ENCODE measurements at regions of chr15 and their contacts with region 1.

Region 1: DNA sequence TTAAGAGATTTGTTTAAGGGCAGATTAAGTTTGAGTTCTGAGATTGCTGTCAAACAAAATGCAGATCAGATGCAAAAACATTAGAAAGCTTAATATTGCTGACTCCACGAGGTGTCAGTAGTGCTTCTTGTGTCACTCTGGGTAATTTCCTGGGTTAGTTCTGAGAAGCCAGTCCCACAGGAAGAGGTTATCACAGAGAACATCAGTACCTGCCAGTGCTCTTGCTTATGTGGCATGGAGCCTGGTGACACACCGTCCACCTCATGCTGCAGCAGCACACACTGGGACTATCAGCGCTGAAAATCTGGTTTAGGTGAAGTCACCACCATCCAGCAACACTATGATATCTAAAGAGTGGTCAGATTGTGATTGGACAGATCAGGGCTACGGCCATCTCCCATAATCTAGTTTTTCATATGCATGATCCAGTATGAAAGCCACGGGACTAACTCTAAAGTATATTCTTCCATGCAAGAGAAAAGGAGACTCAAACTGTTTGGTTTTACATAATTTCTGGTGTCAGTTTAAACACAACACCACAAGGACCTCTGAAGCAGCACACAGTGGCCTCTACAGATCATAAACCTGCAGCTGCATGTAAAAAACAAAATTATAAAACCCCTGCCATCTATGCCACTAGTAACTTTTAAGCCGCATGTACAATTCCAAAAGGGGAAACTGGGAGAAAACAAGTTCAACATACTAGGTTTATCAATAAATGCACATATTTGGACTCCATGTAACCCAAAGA is 36.1 kb upstream of the MYO5C start:
- DNase-seq: peak; percentile 64 to 74 (median 66)
- H3K4me3 ChIP-seq: no peak overlapping the region
- H3K4me3 Mint-ChIP-seq: peak overlapping the region in 7 of 8 donors; percentile 46 to 79 (median 72)
- H3K27ac ChIP-seq: no peak overlapping the region
- H3K27ac Mint-ChIP-seq: peak overlapping the region; percentile 70 to 93 (median 80)
- H3K4me1 ChIP-seq: peaks cover 13% of the 10 kb centered on the region
- H3K4me1 Mint-ChIP-seq: peaks cover 13 to 21% (median 15%) of the 10 kb centered on the region in 4 donors
- H3K27me3 ChIP-seq: no peaks in the 10 kb centered on the region
- H3K27me3 Mint-ChIP-seq: no peaks in the 10 kb centered on the region

Region 2: GRCh38 chr15:52256366-52256765 is 75.3 kb before region 1 on chr15:
- CTCF ChIA-PET with region 1: interaction called, 24 read pairs
- POLR2A ChIA-PET with region 1: no interaction called
- intact Hi-C with region 1: loop called (anchors 1 kb)
- DNase-seq: peak; percentile 75 to 77 (median 76)
- H3K4me3 ChIP-seq: no peak overlapping the region
- H3K4me3 Mint-ChIP-seq: peak overlapping the region; percentile 63 to 90 (median 82)
- H3K27ac ChIP-seq: no peak overlapping the region
- H3K27ac Mint-ChIP-seq: peak overlapping the region; percentile 20 to 86 (median 72)
- H3K4me1 ChIP-seq: peaks cover 15% of the 10 kb centered on the region
- H3K4me1 Mint-ChIP-seq: peaks cover 10 to 26% (median 19%) of the 10 kb centered on the region in 4 donors
- H3K27me3 ChIP-seq: no peaks in the 10 kb centered on the region
- H3K27me3 Mint-ChIP-seq: no peaks in the 10 kb centered on the region

Region 3: DNA sequence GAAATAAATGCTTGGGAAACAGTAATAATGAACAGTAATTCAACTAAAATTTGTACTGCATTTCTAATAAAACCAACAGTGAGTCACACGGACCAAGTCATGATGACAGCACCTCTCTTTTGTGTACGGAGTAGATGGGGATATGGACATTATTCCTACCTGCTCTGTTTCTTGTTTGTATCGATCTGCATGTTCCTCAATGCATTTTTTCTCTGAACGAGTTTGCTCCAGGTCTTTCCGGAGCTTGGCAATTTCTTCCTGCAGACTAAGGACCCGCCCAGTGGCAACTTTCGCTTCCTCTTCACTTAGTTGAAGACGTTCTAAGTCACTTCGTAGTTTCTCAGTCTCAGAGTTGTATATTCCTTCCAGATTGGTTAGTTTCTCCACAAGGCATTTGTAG is 38.3 kb after region 1 on chr15:
- CTCF ChIA-PET with region 1: no interaction called
- POLR2A ChIA-PET with region 1: no interaction called
- intact Hi-C with region 1: no loop called
- DNase-seq: no peak
- H3K4me3 ChIP-seq: no peak overlapping the region
- H3K4me3 Mint-ChIP-seq: no peak overlapping the region
- H3K27ac ChIP-seq: no peak overlapping the region
- H3K27ac Mint-ChIP-seq: peak overlapping the region in 1 of 7 donors; percentile 12
- H3K4me1 ChIP-seq: no peaks in the 10 kb centered on the region
- H3K4me1 Mint-ChIP-seq: no peaks in the 10 kb centered on the region
- H3K27me3 ChIP-seq: no peaks in the 10 kb centered on the region
- H3K27me3 Mint-ChIP-seq: no peaks in the 10 kb centered on the region

Region 4: GRCh38 chr15:52466134-52466701 is 134.6 kb after region 1 on chr15:
- CTCF ChIA-PET with region 1: interaction called, 11 read pairs
- POLR2A ChIA-PET with region 1: interaction called, 4 read pairs
- intact Hi-C with region 1: loop called (anchors 1 kb)
- DNase-seq: peak in 3 of 5 donors; percentile 8 to 49 (median 17)
- H3K4me3 ChIP-seq: no peak overlapping the region
- H3K4me3 Mint-ChIP-seq: peak overlapping the region in 4 of 8 donors; percentile 9 to 39 (median 28)
- H3K27ac ChIP-seq: peak overlapping the region; percentile 35
- H3K27ac Mint-ChIP-seq: peak overlapping the region; percentile 26 to 95 (median 87)
- H3K4me1 ChIP-seq: peaks cover 47% of the 10 kb centered on the region
- H3K4me1 Mint-ChIP-seq: peaks cover 43 to 65% (median 53%) of the 10 kb centered on the region in 4 donors
- H3K27me3 ChIP-seq: no peaks in the 10 kb centered on the region
- H3K27me3 Mint-ChIP-seq: no peaks in the 10 kb centered on the region

Region 5: GRCh38 chr15:52568601-52569256 is 237.1 kb after region 1 on chr15 and contains the start of gene ARPP19:
- CTCF ChIA-PET with region 1: interaction called, 5 read pairs
- POLR2A ChIA-PET with region 1: interaction called, 3 read pairs
- intact Hi-C with region 1: loop called (anchors 1 kb)
- DNase-seq: peak; percentile 78 to 84 (median 80)
- H3K4me3 ChIP-seq: peak within 1 kb of the TSS; percentile 64 to 80
- H3K4me3 Mint-ChIP-seq: peak within 1 kb of the TSS; percentile 94 to 100 (median 96)
- H3K27ac ChIP-seq: peak within 1 kb of the TSS; percentile 98
- H3K27ac Mint-ChIP-seq: peak within 1 kb of the TSS; percentile 98 to 100 (median 100)
- H3K4me1 ChIP-seq: peaks cover 44% of the 10 kb centered on the region
- H3K4me1 Mint-ChIP-seq: peaks cover 31 to 46% (median 38%) of the 10 kb centered on the region in 4 donors
- H3K27me3 ChIP-seq: no peaks in the 10 kb centered on the region
- H3K27me3 Mint-ChIP-seq: no peaks in the 10 kb centered on the region
- total RNA-seq, gene ARPP19: 105 to 130 TPM

Region 6: GRCh38 chr15:52584414-52584813 is 252.7 kb after region 1 on chr15:
- CTCF ChIA-PET with region 1: interaction called, 12 read pairs
- POLR2A ChIA-PET with region 1: no interaction called
- intact Hi-C with region 1: no loop called
- DNase-seq: no peak
- H3K4me3 ChIP-seq: no peak overlapping the region
- H3K4me3 Mint-ChIP-seq: no peak overlapping the region
- H3K27ac ChIP-seq: no peak overlapping the region
- H3K27ac Mint-ChIP-seq: no peak overlapping the region
- H3K4me1 ChIP-seq: no peaks in the 10 kb centered on the region
- H3K4me1 Mint-ChIP-seq: no peaks in the 10 kb centered on the region
- H3K27me3 ChIP-seq: no peaks in the 10 kb centered on the region
- H3K27me3 Mint-ChIP-seq: no peaks in the 10 kb centered on the region

Region 7: GRCh38 chr15:52679232-52680040 is 347.8 kb after region 1 on chr15 and contains the start of gene ATOSA:
- CTCF ChIA-PET with region 1: interaction called, 3 read pairs
- POLR2A ChIA-PET with region 1: interaction called, 11 read pairs
- intact Hi-C with region 1: loop called (anchors 1 kb)
- DNase-seq: peak; percentile 91 to 96 (median 92)
- H3K4me3 ChIP-seq: peak within 1 kb of the TSS; percentile 55 to 82
- H3K4me3 Mint-ChIP-seq: peak within 1 kb of the TSS; percentile 93 to 99 (median 99)
- H3K27ac ChIP-seq: peak within 1 kb of the TSS; percentile 97
- H3K27ac Mint-ChIP-seq: peak within 1 kb of the TSS; percentile 93 to 100 (median 100)
- H3K4me1 ChIP-seq: peaks cover 61% of the 10 kb centered on the region
- H3K4me1 Mint-ChIP-seq: peaks cover 28 to 80% (median 41%) of the 10 kb centered on the region in 4 donors
- H3K27me3 ChIP-seq: no peaks in the 10 kb centered on the region
- H3K27me3 Mint-ChIP-seq: no peaks in the 10 kb centered on the region
- total RNA-seq, gene ATOSA: 95.6 to 97.1 TPM

Region 8: GRCh38 chr15:52730173-52730572 is 398.5 kb after region 1 on chr15:
- CTCF ChIA-PET with region 1: interaction called, 57 read pairs
- POLR2A ChIA-PET with region 1: interaction called, 5 read pairs
- intact Hi-C with region 1: loop called (anchors 1 kb)
- DNase-seq: peak; percentile 57 to 75 (median 73)
- H3K4me3 ChIP-seq: no peak overlapping the region
- H3K4me3 Mint-ChIP-seq: peak overlapping the region in 5 of 8 donors; percentile 16 to 64 (median 41)
- H3K27ac ChIP-seq: no peak overlapping the region
- H3K27ac Mint-ChIP-seq: peak overlapping the region; percentile 51 to 91 (median 80)
- H3K4me1 ChIP-seq: peaks cover 16% of the 10 kb centered on the region
- H3K4me1 Mint-ChIP-seq: peaks cover 8 to 21% (median 14%) of the 10 kb centered on the region in 4 donors
- H3K27me3 ChIP-seq: no peaks in the 10 kb centered on the region
- H3K27me3 Mint-ChIP-seq: peaks cover 0 to 2% of the 10 kb centered on the region in 2 donors

Measured in CD4-positive, alpha-beta memory T cell (primary cell).